Head of caudate nucleus (tissue), 42 donors: ENCODE measurements at regions of chr20 and their contacts with region 1.

Region 1: GRCh38 chr20:24350923-24351368 is 118.5 kb upstream of the SYNDIG1 start:
- DNase-seq: no peak

Region 2: GRCh38 chr20:24289737-24290481 is 61.0 kb before region 1 on chr20:
- intact Hi-C with region 1: no loop called
- DNase-seq: peak in 8 of 42 donors; percentile 2 to 51 (median 9)

Region 3: DNA sequence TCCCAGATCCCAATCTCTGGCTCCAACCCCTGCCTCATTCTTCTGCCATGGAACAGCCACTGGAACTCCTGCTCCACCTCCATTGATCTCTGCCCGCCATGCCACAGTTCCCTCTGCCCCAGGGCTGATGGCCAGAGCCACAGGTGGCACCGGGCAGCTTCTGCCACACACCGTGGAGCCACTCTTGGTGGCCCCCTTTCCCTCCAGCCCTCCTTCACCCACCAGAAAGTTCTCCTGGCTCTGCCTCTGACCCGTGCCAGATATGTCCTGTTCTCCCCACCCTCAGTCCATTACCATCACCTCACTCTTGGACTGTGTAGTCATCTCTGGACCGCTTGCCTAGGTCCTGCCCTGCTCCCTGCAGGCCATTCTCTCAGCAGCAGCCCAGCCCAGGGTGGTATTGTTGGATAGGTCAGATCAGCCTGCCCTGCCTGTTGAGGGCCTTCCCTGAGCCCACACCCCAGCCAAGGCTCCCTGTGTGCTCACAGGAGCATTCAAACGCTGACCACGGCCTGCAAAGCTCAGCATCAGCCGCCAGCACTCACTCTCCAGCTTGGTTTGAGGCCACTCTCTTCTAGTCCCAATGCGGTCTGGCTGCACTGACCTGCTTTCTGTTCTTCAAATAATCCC is 101.7 kb after region 1 on chr20:
- intact Hi-C with region 1: loop called (anchors 10 kb)
- DNase-seq: peak in 1 of 42 donors; percentile 9